AG04449 (cell line): ENCODE measurements at regions of chr12 and their contacts with region 1.

Region 1: GRCh38 chr12:49088190-49088931 is 6.2 kb downstream of the DHH start:
- DNase-seq: peak; percentile 41
- H3K4me3 ChIP-seq: no peak overlapping the region
- CTCF ChIP-seq: peak; percentile 87

Region 2: GRCh38 chr12:48995061-48995879 is 93.1 kb before region 1 on chr12:
- CTCF ChIA-PET with region 1: interaction called, 15 read pairs
- POLR2A ChIA-PET with region 1: no interaction called
- DNase-seq: no peak
- H3K4me3 ChIP-seq: peak overlapping the region; percentile 25
- CTCF ChIP-seq: peak; percentile 83

Region 3: GRCh38 chr12:49061157-49061650 is 27.2 kb before region 1 on chr12:
- CTCF ChIA-PET with region 1: interaction called, 372 read pairs
- POLR2A ChIA-PET with region 1: no interaction called
- DNase-seq: no peak
- H3K4me3 ChIP-seq: peak overlapping the region; percentile 84
- CTCF ChIP-seq: no peak

Region 4: GRCh38 chr12:49110464-49111155 is 22.2 kb after region 1 on chr12 and contains the start of gene LMBR1L:
- CTCF ChIA-PET with region 1: interaction called, 430 read pairs
- POLR2A ChIA-PET with region 1: interaction called, 6 read pairs
- DNase-seq: peak; percentile 88
- H3K4me3 ChIP-seq: peak within 1 kb of the TSS; percentile 87
- CTCF ChIP-seq: peak; percentile 62

Region 5: DNA sequence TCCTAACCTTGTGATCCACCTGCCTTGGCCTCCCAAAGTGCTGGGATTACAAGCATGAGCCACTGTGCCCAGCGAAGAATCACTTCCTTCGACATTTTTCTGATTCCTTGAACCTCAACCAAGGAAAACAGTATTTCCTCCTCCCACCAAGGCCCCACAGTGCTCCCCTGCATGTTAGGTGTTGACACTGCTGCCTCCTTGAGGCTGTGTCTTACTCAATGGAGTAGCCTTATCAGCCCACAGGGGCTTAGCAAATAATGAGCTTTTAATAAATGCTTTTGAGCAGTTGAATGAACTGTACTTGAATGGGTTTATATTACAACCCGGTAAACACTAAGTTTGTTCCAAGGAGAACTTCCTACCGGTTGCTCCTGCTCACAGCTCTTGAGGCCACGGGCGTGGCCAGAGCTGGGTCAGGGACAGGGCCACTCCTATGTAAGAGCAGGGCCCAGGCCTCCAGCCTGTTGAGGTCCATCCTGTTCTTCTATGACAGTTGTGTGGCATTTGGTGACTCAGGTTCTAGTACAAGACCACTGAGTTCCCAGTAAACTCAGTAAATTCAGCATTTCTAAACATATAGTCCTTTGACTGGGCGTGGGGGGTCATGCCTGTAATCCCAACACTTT is 137.3 kb after region 1 on chr12:
- CTCF ChIA-PET with region 1: interaction called, 16 read pairs
- POLR2A ChIA-PET with region 1: no interaction called
- DNase-seq: no peak
- H3K4me3 ChIP-seq: no peak overlapping the region
- CTCF ChIP-seq: no peak

Region 6: DNA sequence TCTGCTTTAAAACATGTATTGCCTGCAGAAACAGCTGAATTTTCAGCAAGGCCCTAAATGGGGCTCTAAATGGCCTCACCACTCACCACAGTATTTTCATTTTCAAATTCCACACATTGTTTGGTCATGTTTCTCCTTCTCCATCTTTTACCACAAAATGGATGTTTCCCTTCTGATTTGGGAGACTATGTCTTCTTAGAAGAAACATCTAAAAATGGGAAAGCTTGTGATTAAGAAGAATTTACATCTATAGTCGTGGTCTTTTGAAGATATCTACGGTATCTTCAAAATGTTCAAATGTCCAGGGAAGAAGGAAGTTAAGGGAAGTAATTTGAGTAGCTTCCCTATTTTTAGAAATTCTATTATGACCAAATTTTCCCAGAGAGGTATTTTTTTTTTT is 155.8 kb after region 1 on chr12:
- CTCF ChIA-PET with region 1: interaction called, 99 read pairs
- POLR2A ChIA-PET with region 1: no interaction called
- DNase-seq: peak; percentile 62
- H3K4me3 ChIP-seq: no peak overlapping the region
- CTCF ChIP-seq: no peak